HepG2 (cell line): ENCODE measurements at regions of chr6 and their contacts with region 1.

Region 1: GRCh38 chr6:137641474-137642077 is 147.4 kb upstream of the OLIG3 start:
- DNase-seq: peak; percentile 79
- ATAC-seq: peak; percentile 99
- H3K4me3 ChIP-seq: no peak overlapping the region
- H3K27ac ChIP-seq: no peak overlapping the region
- H3K4me1 ChIP-seq: peaks cover 14% of the 10 kb centered on the region; the same call in 1 of the 2 replicates
- H3K27me3 ChIP-seq: no peaks in the 10 kb centered on the region
- CTCF ChIP-seq: peak; percentile 93
- EP300 ChIP-seq: no peak
- POLR2A ChIP-seq: no peak
- RAD21 ChIP-seq: peak; percentile 90

Region 2: DNA sequence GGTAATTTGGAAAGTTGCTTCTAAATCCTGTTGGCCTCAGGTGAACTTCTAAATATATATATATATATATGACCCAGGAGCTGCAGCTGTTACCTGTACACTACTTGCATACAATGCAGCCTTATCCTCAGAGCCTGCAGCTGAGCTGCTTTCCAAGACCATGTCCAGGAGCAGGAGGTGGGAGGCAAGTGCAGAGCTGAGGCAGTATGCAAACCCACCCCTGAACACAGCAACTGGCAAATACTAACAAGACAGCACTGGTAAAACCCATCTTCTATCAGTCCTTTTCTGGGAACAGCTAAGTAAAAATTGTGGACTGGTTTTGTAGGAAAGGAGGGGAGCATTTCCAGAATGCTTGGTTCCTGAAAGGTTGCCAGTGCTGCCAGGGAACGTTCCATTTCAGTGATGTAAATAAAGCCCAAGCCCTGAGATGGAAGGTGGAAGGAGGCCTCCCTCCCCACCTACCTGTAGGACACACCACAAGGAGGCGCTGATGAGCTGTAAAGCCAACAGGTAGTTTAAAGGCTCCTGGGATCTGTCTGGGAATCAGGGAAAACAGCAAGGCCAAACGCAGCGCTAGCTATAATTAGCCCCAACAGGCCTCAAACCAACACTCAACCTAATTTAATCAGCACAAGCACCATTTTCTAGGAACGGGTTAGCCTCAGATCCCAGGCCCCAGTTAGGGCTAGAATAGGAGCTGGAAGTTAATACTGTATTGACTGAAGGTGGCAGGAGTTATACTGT is 997.6 kb before region 1 on chr6:
- CTCF ChIA-PET with region 1: interaction called, 6 read pairs
- POLR2A ChIA-PET with region 1: no interaction called
- in situ Hi-C with region 1: loop called (anchors 10 kb)
- intact Hi-C with region 1: loop called (anchors 5 kb)
- DNase-seq: peak; percentile 65
- ATAC-seq: peak; percentile 99
- H3K4me3 ChIP-seq: no peak overlapping the region
- H3K27ac ChIP-seq: no peak overlapping the region
- H3K4me1 ChIP-seq: no peaks in the 10 kb centered on the region
- H3K27me3 ChIP-seq: no peaks in the 10 kb centered on the region; a peak in 1 of 5 replicates
- CTCF ChIP-seq: peak; percentile 83
- EP300 ChIP-seq: no peak
- POLR2A ChIP-seq: no peak
- RAD21 ChIP-seq: peak; percentile 42; the same call in 1 of the 2 replicates

Region 3: DNA sequence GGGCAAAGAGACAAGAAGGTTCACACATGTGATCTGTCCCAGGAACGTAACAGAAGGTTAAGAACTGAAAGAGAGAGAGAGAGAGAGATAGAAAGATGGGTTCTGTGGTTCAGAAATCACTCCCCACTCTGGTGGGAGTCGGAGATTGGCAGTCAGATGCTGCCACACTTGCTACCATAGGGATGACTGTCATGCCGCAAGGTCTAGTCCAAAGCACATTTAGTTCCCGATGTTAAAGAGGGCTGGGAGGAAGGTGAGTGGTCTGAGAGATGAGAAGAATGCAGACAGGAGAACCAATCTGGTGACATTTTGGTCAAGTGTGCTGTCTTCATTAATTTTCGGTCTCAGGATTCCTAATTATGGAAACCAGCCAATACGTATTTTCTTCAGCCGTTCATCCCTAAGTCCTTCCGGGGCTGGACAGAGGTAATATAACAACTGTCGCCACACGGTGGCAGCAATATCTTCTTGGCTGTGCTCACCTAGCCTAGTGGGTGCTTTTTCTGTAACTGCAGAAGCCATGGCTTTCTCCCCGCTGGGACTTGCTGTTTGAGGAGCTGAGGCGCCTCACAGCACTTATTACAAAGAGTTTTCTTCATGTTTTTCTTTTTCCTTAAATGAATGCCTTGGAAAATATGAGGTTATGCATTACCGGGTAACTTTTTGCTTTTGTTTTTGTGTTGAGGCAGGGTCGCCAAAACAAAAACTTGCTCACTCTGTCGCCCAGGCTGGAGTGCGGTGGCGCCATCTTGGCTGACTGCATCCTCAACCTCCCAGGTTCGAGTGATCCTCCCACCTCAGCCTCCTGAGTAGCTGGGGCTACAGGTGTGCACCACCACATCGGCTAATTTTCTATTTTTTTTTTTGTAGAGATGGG is 673.5 kb before region 1 on chr6:
- CTCF ChIA-PET with region 1: interaction called, 5 read pairs
- POLR2A ChIA-PET with region 1: no interaction called
- in situ Hi-C with region 1: loop called (anchors 25 kb)
- intact Hi-C with region 1: loop called (anchors 1 kb)
- DNase-seq: peak; percentile 69
- ATAC-seq: peak; percentile 99
- H3K4me3 ChIP-seq: no peak overlapping the region
- H3K27ac ChIP-seq: no peak overlapping the region
- H3K4me1 ChIP-seq: no peaks in the 10 kb centered on the region
- H3K27me3 ChIP-seq: peaks cover 0 to 7% of the 10 kb centered on the region in 2 experiments; a peak in 1 of 5 replicates
- CTCF ChIP-seq: peak; percentile 83
- EP300 ChIP-seq: no peak
- POLR2A ChIP-seq: no peak
- RAD21 ChIP-seq: peak; percentile 62

Region 4: DNA sequence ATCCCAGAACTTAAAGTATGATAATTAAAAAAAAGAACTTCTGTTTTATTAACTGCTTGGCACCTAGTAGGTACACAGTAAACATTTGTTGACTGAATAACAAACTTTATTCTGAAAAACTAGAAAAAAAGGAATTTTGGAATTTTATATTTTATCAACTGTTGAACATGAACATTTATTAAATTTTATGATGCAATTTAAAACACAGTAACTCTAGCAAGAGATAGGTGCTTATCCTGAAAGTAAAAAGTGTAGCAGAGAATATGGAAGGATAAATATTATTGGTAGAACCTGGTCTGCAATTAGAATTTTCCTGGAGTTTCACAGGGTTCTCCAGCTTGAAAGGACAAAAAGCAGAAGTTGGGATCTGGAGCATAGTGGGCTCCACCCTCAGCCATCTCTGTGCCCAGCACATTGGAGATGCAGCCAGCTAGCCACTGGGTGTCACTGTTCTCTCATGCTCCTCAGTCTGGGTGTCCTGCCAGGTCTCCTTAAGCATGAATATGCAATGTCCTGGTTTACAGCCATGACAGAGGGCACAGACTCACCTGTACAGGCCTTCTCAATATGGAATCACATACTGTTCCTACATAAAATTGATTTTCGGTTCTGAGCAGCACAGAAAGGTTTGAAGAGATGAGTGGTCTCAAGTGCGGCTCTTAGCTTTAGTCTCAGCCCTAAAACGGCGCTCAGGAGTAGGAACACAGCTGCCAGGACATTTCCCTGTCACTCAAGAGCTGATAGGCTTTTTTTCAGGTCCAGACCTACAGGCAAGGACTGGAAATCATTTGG is 565.1 kb before region 1 on chr6:
- CTCF ChIA-PET with region 1: interaction called, 20 read pairs
- POLR2A ChIA-PET with region 1: no interaction called
- in situ Hi-C with region 1: no loop called
- intact Hi-C with region 1: loop called (anchors 1 kb)
- DNase-seq: peak; percentile 74
- ATAC-seq: peak; percentile 100
- H3K4me3 ChIP-seq: no peak overlapping the region
- H3K27ac ChIP-seq: no peak overlapping the region
- H3K4me1 ChIP-seq: no peaks in the 10 kb centered on the region
- H3K27me3 ChIP-seq: no peaks in the 10 kb centered on the region
- CTCF ChIP-seq: peak; percentile 93
- EP300 ChIP-seq: no peak
- POLR2A ChIP-seq: no peak
- RAD21 ChIP-seq: peak; percentile 85

Region 5: GRCh38 chr6:137094411-137095008 is 547.1 kb before region 1 on chr6:
- CTCF ChIA-PET with region 1: interaction called, 39 read pairs
- POLR2A ChIA-PET with region 1: no interaction called
- in situ Hi-C with region 1: loop called (anchors 5 kb)
- intact Hi-C with region 1: loop called (anchors 1 kb)
- DNase-seq: peak; percentile 74
- ATAC-seq: peak; percentile 87
- H3K4me3 ChIP-seq: no peak overlapping the region
- H3K27ac ChIP-seq: no peak overlapping the region
- H3K4me1 ChIP-seq: peaks cover 8% of the 10 kb centered on the region; the same call in 1 of the 2 replicates
- H3K27me3 ChIP-seq: peaks cover 0 to 5% of the 10 kb centered on the region in 2 experiments; a peak in 1 of 5 replicates
- CTCF ChIP-seq: peak; percentile 85
- EP300 ChIP-seq: no peak; a peak in 1 of 4 replicates
- POLR2A ChIP-seq: no peak
- RAD21 ChIP-seq: peak; percentile 83

Region 6: DNA sequence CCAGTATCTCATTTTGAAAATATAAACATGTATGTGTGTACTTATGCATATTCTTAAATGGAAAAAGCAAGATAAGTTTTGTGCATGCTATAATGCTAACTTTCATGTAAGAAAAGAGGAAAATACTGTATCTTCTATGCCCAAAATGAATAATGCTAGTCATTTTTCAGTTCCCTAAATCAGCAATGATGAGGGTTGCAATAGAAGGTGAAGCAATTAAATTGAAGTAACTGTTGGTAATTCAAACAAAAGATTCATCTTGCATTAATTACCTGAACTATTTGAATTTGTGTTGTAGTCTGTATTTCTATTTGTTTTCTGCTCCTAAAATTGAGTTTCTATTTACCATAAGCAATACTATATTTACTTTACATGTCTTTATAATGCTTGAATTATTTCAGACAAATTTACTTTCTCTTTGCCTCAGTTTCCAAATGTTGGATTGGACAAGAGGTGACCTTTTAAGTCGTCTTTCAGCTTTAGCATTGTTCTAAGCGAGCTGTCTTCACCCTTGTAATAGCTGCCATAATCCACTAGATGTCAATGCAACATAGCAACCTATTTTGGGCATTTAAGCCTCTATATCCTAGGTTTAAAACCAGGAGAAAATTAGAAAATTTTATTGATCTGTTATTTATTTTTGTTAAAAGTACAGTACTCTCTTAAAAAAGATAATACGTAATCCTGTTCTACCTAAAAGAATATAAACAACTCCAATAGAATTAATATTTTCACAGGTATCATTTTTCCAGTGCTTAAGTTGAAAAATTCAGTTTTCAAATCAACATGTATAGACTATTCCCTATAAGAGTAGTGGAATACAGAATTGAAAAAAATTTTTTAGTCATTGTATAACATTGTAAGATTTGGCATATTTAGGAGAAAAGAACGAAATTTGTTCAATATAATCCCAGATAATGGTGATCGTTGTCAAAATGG is 370.1 kb before region 1 on chr6:
- CTCF ChIA-PET with region 1: interaction called, 50 read pairs
- POLR2A ChIA-PET with region 1: no interaction called
- in situ Hi-C with region 1: loop called (anchors 5 kb)
- intact Hi-C with region 1: loop called (anchors 1 kb)
- DNase-seq: peak; percentile 75
- ATAC-seq: peak; percentile 85
- H3K4me3 ChIP-seq: no peak overlapping the region
- H3K27ac ChIP-seq: no peak overlapping the region
- H3K4me1 ChIP-seq: no peaks in the 10 kb centered on the region
- H3K27me3 ChIP-seq: no peaks in the 10 kb centered on the region
- CTCF ChIP-seq: peak; percentile 88
- EP300 ChIP-seq: no peak
- POLR2A ChIP-seq: no peak
- RAD21 ChIP-seq: peak; percentile 94

Region 7: GRCh38 chr6:137944793-137945498 is 303.4 kb after region 1 on chr6:
- CTCF ChIA-PET with region 1: no interaction called
- POLR2A ChIA-PET with region 1: no interaction called
- in situ Hi-C with region 1: no loop called
- intact Hi-C with region 1: loop called (anchors 5 kb)
- DNase-seq: peak; percentile 50
- ATAC-seq: peak; percentile 95
- H3K4me3 ChIP-seq: no peak overlapping the region
- H3K27ac ChIP-seq: no peak overlapping the region
- H3K4me1 ChIP-seq: peaks cover 5% of the 10 kb centered on the region
- H3K27me3 ChIP-seq: peaks cover 4 to 7% of the 10 kb centered on the region in 2 experiments; a peak in 2 of 5 replicates
- CTCF ChIP-seq: peak; percentile 90
- EP300 ChIP-seq: no peak
- POLR2A ChIP-seq: no peak
- RAD21 ChIP-seq: peak; percentile 84